HCT116 (cell line): ENCODE measurements at regions of chr18 and their contacts with region 1.

Region 1: DNA sequence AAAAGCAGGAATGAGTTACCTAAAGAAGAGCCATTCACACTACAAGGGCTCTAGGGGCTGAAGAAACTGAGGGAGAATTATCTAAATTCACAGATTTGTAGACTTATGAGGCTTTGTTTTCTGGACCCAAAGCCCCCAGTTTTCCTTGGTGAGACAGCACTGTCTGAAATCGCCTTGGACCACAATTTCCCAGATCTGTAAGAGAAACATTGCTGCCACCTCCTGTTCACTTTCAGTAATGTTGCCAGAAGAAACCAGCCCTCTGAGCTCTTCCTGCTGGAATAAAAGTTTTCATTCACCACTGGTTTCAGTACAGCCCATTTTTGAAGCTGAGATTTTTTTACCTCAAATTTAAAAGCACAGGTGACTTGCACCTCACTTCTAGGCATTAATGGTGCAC is 169.2 kb downstream of the CDH20 start:
- DNase-seq: peak; percentile 35
- ATAC-seq: peak; percentile 80
- H3K4me3 ChIP-seq: no peak overlapping the region
- H3K27ac ChIP-seq: no peak overlapping the region
- H3K4me1 ChIP-seq: no peaks in the 10 kb centered on the region
- H3K27me3 ChIP-seq: peaks cover 44% of the 10 kb centered on the region
- CTCF ChIP-seq: peak; percentile 54 to 71 (median 60); a peak in 5 of 6 replicates
- POLR2A ChIP-seq: no peak
- RAD21 ChIP-seq: peak; percentile 71

Region 2: GRCh38 chr18:59988098-59988706 is 1514.3 kb before region 1 on chr18:
- CTCF ChIA-PET with region 1: interaction called, 17 read pairs
- POLR2A ChIA-PET with region 1: no interaction called
- RAD21 ChIA-PET with region 1: no interaction called
- intact Hi-C with region 1: loop called (anchors 5 kb)
- DNase-seq: peak; percentile 49
- ATAC-seq: peak; percentile 70
- H3K4me3 ChIP-seq: no peak overlapping the region
- H3K27ac ChIP-seq: no peak overlapping the region
- H3K4me1 ChIP-seq: peaks cover 0 to 31% of the 10 kb centered on the region in 2 experiments; a peak in 3 of 4 replicates
- H3K27me3 ChIP-seq: no peaks in the 10 kb centered on the region
- CTCF ChIP-seq: peak; percentile 66 to 95 (median 90); a peak in 5 of 6 replicates
- POLR2A ChIP-seq: no peak
- RAD21 ChIP-seq: peak; percentile 88

Region 3: DNA sequence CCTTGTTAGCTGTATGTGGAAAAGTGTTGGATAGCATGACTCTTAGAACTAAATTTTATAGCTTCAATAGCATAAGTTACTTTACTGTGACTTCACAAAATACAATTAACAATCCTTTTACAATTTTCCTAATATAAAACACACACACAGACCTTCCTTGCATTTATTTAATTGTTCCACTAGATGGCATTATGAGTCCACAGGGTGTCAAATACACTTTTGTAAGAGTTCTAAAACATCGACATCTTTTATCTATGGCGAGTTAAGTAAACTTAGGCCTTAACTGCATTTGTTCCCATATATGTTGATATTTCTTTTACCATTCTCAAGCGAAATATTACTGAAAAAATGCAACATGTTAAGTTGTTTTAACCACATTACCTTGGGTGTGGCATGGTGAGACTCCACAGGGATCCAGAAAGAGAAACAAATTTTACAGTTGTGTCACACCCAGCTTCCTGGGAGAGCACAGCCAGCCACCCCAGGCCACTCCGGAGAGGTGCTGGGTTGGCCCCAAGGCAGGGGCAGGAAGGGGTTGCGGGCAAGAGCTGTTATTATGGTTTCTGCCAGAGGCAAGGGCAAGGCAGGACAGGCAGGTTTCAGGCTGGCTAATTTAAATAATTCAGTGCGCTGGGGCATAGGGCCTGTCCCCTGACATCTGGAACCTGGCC is 817.5 kb before region 1 on chr18:
- CTCF ChIA-PET with region 1: interaction called, 3 read pairs
- POLR2A ChIA-PET with region 1: no interaction called
- RAD21 ChIA-PET with region 1: interaction called in 1 of 2 experiments, 3 read pairs
- intact Hi-C with region 1: loop called (anchors 1 kb)
- DNase-seq: peak; percentile 19
- ATAC-seq: peak; percentile 71
- H3K4me3 ChIP-seq: no peak overlapping the region
- H3K27ac ChIP-seq: no peak overlapping the region
- H3K4me1 ChIP-seq: peaks cover 0 to 3% of the 10 kb centered on the region in 2 experiments; a peak in 1 of 4 replicates
- H3K27me3 ChIP-seq: peaks cover 3% of the 10 kb centered on the region; the same call in 1 of the 2 replicates
- CTCF ChIP-seq: peak; percentile 40 to 72 (median 51); a peak in 5 of 6 replicates
- POLR2A ChIP-seq: no peak
- RAD21 ChIP-seq: peak; percentile 76

Region 4: GRCh38 chr18:60809937-60810336 is 692.5 kb before region 1 on chr18:
- CTCF ChIA-PET with region 1: interaction called, 5 read pairs
- POLR2A ChIA-PET with region 1: no interaction called
- RAD21 ChIA-PET with region 1: no interaction called
- intact Hi-C with region 1: loop called (anchors 5 kb)
- DNase-seq: no peak
- ATAC-seq: no peak
- H3K4me3 ChIP-seq: no peak overlapping the region
- H3K27ac ChIP-seq: no peak overlapping the region
- H3K4me1 ChIP-seq: no peaks in the 10 kb centered on the region
- H3K27me3 ChIP-seq: no peaks in the 10 kb centered on the region
- CTCF ChIP-seq: no peak
- POLR2A ChIP-seq: no peak
- RAD21 ChIP-seq: no peak

Region 5: DNA sequence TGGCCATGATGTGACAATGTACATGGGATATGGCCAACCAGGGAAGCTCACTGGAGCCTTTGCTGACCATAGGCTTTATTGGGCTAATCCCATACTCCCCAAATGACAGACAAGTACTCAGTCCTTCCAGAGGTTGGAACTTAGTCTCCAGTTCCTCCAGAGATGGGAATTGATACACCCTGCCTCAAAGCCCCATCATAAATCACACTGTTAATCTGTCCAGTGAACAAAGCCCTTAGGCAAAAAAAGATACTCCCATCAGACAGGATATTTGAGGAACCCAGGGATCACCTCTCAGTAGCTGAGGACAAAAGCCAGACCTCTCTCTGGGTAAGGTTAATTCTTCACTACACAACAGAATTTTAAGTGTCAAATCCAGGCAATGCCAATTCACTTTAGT is 416.7 kb before region 1 on chr18:
- CTCF ChIA-PET with region 1: interaction called, 6 read pairs
- POLR2A ChIA-PET with region 1: no interaction called
- RAD21 ChIA-PET with region 1: no interaction called
- intact Hi-C with region 1: loop called (anchors 2 kb)
- DNase-seq: no peak
- ATAC-seq: no peak
- H3K4me3 ChIP-seq: no peak overlapping the region
- H3K27ac ChIP-seq: no peak overlapping the region
- H3K4me1 ChIP-seq: no peaks in the 10 kb centered on the region
- H3K27me3 ChIP-seq: no peaks in the 10 kb centered on the region
- CTCF ChIP-seq: no peak
- POLR2A ChIP-seq: no peak
- RAD21 ChIP-seq: no peak

Region 6: GRCh38 chr18:61322265-61322873 is 180.1 kb before region 1 on chr18:
- CTCF ChIA-PET with region 1: interaction called, 80 read pairs
- POLR2A ChIA-PET with region 1: interaction called, 3 read pairs
- RAD21 ChIA-PET with region 1: interaction called in 1 of 2 experiments, 3 read pairs
- intact Hi-C with region 1: loop called (anchors 1 kb)
- DNase-seq: peak; percentile 27
- ATAC-seq: peak; percentile 99
- H3K4me3 ChIP-seq: no peak overlapping the region
- H3K27ac ChIP-seq: no peak overlapping the region
- H3K4me1 ChIP-seq: no peaks in the 10 kb centered on the region
- H3K27me3 ChIP-seq: no peaks in the 10 kb centered on the region
- CTCF ChIP-seq: peak; percentile 79 to 90 (median 87); a peak in 5 of 6 replicates
- POLR2A ChIP-seq: no peak
- RAD21 ChIP-seq: peak; percentile 79